ENCODE measurements at regions of chr12 and their contacts with region 1.

Region 1: DNA sequence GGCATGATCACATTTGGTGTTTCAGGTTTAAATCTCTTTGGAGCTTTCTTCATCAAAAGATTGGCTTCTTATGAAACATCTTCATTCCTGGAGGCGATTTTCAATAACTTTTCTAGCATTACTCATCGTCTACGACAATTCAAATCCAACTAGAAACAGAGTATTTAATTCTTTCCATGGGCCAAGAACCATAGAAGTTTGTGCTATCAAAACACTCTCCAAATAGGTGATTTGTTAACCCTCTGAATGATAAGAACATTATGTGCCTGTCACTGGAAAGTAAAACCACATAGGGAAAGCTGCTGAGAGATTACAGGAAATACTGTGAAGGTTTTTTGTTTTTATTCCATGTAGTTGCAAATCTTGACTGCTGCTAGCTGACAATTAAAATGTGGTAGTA is 6.9 kb upstream of the DCN start:
- DNase-seq: no peak
- H3K4me3 ChIP-seq: no peak overlapping the region
- H3K27ac ChIP-seq: no peak overlapping the region
- H3K27me3 ChIP-seq: no peaks in the 10 kb centered on the region
- CTCF ChIP-seq: no peak

Region 2: GRCh38 chr12:91098941-91099340 is 90.6 kb before region 1 on chr12:
- CTCF ChIA-PET with region 1: no interaction called
- POLR2A ChIA-PET with region 1: no interaction called
- DNase-seq: peak; percentile 78
- H3K4me3 ChIP-seq: no peak overlapping the region
- H3K27ac ChIP-seq: no peak overlapping the region
- H3K27me3 ChIP-seq: no peaks in the 10 kb centered on the region
- CTCF ChIP-seq: no peak

Region 3: DNA sequence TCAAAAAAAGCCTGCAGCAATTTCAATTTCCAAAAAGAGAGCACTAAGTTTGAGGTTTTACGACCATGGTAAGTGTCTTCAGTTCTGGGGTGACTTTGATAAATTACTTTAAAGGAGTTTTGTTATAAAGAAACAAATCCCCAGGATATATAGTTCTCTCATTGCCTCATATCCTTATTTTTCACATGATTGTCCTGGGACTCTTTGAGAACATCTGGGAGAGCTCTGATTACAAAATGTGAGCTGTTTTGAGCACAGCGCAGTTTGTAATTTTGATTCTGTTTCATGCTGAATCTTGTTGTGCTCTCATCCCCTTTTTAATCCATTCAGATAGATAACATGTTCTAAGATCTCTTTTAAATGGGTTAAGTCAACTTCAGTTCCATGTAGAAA is 60.8 kb after region 1 on chr12:
- CTCF ChIA-PET with region 1: interaction called, 10 read pairs
- POLR2A ChIA-PET with region 1: no interaction called
- DNase-seq: no peak
- H3K4me3 ChIP-seq: no peak overlapping the region
- H3K27ac ChIP-seq: no peak overlapping the region
- H3K27me3 ChIP-seq: no peaks in the 10 kb centered on the region
- CTCF ChIP-seq: no peak